A549 (cell line): ENCODE measurements at regions of chrX and their contacts with region 1.

Region 1: GRCh38 chrX:110853610-110854009 is 58.0 kb upstream of the CHRDL1 start:
- DNase-seq: peak; percentile 5 to 6
- ATAC-seq: peak; percentile 70 to 79; a peak in 5 of 6 replicates
- H3K4me3 ChIP-seq: no peak overlapping the region
- H3K27ac ChIP-seq: no peak overlapping the region
- H3K4me1 ChIP-seq: peaks cover 6% of the 10 kb centered on the region; the same call in 1 of the 3 replicates
- CTCF ChIP-seq: peak; percentile 18; the same call in 1 of the 3 replicates
- EP300 ChIP-seq: no peak
- POLR2A ChIP-seq: no peak
- RAD21 ChIP-seq: 0 out of 5 replicates have a peak, but pooled peaks of 1 of the 2 experiments have one; percentile 12

Region 2: DNA sequence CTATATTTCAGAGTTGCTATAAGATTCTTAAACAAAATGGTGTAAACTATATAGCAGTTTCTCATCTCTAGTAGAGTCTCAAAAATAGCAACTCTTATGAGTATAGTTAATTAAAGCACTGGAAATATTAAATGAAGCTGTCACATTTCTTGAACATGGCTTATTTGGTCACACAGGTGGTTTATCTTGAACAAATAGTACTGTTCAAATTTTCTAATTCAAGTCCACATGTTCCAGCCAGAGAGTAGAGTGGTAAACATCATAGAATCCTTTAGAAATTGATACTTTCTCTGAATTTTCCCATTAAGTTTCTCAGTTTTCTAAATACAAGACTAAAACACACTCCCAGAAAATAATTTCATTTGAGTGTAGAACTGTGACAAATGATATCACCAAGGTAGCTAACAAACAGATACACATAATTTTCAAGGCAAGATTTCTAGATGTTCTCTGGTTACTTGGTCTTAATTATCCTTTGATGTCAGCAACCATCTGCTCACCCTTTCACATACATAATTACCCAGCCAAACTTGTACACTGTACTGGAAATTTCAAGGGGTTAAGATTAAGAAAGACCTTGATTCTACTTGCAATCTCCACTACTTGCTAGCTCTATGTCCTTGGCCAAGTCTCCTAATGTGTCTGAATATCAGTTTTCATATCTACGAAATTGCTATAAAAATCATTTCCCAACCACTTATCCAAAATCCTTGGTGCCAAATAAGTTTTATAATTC is 218.1 kb after region 1 on chrX:
- CTCF ChIA-PET with region 1: no interaction called
- POLR2A ChIA-PET with region 1: no interaction called
- DNase-seq: no peak
- ATAC-seq: no peak
- H3K4me3 ChIP-seq: no peak overlapping the region
- H3K27ac ChIP-seq: no peak overlapping the region
- H3K4me1 ChIP-seq: no peaks in the 10 kb centered on the region
- CTCF ChIP-seq: no peak
- EP300 ChIP-seq: no peak
- POLR2A ChIP-seq: no peak
- RAD21 ChIP-seq: no peak

Region 3: DNA sequence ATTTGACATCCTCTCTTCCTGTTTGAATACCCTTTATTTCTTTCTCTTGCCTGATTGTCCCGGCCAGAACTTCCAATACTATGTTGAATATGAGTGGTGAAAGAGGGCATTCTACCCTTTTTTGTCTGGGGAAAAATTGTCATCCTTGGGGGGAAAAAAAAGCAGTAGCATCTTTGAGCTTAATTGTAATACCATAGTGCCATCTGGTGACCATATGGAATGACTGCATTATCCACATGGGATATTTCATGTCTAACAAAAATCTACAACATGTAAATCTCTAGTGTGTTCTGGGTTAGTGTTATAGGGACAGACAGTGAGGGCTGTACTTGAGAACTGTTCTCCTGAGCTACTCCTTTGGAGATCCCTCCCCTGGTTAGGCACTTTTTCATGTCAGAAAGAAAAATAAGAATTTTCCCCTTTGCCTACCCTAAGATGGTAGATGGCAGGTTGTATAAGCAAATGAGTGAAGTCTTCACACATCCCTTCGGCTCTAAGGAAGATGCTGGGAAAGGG is 390.7 kb after region 1 on chrX:
- CTCF ChIA-PET with region 1: interaction called, 12 read pairs
- POLR2A ChIA-PET with region 1: no interaction called
- DNase-seq: peak; percentile 8 to 12
- ATAC-seq: no peak
- H3K4me3 ChIP-seq: no peak overlapping the region
- H3K27ac ChIP-seq: no peak overlapping the region
- H3K4me1 ChIP-seq: no peaks in the 10 kb centered on the region
- CTCF ChIP-seq: peak; percentile 50
- EP300 ChIP-seq: no peak
- POLR2A ChIP-seq: no peak
- RAD21 ChIP-seq: peak; percentile 58 to 62